Right ventricle myocardium inferior (tissue), 1 donor: ENCODE measurements at regions of chr4 and their contacts with region 1.

Region 1: GRCh38 chr4:151530783-151531182 is 121.8 kb downstream of the FHIP1A start:
- DNase-seq: no peak
- ATAC-seq: no peak

Region 2: GRCh38 chr4:151408630-151409469 is 121.9 kb before region 1 on chr4 and contains the start of gene FHIP1A:
- intact Hi-C with region 1: loop called (anchors 5 kb)
- DNase-seq: peak; percentile 81
- ATAC-seq: peak; percentile 81
- total RNA-seq, gene FHIP1A: 18.5 TPM